ENCODE measurements at regions of chr11 and their contacts with region 1.

Region 1: DNA sequence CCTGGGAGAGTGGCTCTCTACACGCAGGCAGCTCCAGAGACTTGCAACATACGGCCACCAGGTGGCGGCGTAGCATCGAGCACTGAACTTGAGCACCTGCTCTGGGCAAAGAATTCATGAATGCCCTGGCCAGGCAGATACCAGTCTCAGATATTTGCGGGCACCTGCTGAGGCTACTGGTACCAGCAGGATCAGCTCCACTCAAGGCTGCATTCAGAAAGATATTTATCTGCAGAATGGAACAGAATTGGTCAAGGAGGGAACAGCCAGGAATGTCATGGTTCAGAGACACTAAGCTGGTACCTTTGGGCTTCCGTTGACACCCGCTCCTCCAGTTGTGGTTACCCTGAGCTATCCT is 10.8 kb upstream of the CCDC86 start:
- DNase-seq: peak; percentile 85 to 90
- H3K4me3 ChIP-seq: no peak overlapping the region
- H3K27ac ChIP-seq: no peak overlapping the region
- H3K4me1 ChIP-seq: no peaks in the 10 kb centered on the region
- H3K27me3 ChIP-seq: no peaks in the 10 kb centered on the region
- CTCF ChIP-seq: peak; percentile 83 to 96 (median 88)
- POLR2A ChIP-seq: no peak

Region 2: DNA sequence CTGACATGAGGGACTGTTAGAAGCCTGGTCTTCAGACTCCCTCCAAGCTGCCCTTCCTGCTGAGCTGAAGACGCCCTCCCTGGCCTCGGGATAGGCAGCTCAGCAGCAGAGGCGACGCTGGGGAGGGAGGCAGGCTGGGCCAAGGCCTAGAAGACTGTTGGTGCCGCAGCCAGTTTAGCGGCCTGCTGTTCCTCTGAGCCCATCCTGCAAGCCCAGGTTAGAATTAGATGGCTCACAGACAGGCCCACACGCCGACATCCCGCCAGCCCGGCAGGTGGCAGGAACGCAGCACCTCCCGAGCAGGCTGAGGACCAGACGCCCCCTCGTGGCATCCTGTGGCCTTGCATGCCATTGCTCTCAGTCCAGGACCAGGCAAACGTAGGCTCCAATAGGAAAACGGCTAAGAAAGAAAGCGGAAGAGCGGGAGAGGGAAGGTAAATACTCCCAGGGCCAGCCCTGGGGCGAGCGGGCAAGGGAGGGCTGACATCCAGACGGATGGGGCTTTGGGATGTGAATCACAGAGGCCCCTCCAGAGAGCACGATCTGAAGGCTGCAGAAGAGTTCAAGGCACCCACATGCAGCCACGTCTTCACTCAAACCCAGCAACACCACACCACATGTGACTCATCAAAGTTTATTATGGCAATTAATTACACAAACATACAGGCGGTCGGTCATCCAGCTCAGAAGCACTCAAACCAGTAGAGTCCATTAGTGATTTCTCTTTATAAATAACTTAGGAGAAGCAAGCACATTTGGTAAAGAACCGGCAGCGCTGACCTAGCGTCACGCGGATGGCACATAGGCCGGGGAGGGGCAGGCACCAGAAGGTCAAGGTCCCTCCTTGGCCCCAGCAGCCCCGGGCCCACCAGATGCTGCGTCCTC is 298.8 kb after region 1 on chr11:
- intact Hi-C with region 1: loop called (anchors 5 kb)
- DNase-seq: peak; percentile 86 to 90
- H3K4me3 ChIP-seq: no peak overlapping the region
- H3K27ac ChIP-seq: no peak overlapping the region
- H3K4me1 ChIP-seq: peaks cover 11 to 27% of the 10 kb centered on the region in 2 donors
- H3K27me3 ChIP-seq: no peaks in the 10 kb centered on the region
- CTCF ChIP-seq: peak; percentile 96 to 100 (median 98)
- POLR2A ChIP-seq: no peak

Measured in thyroid gland (tissue), 4 donors.